ENCODE measurements at regions of chr6 and their contacts with region 1.

Region 1: DNA sequence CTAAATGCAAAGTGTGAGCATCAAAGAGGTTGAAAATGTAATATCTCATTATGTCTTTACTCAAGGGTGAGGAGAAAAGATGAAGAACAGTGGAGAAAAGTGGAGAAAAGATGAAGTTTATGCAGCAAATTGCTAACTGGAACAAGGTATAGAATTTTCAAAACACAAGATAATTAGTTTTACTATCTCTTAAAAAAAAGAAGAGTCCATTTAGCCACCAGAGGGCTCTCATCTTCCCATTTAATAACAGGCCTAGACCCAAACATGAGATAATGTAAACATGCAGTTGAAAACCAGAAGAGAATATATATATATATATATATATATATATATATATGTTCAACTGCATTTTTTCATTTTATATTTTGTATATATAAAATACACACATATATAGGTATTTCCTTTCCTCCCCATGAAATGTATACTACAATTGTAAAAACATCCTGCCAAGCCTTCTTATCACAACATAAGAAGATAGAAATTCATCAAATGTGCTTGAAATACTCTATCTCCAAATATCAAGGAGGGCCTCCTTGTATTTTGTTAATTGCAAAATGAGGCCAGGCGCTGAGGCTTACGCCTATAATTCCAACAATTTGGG is 78.4 kb downstream of the ADTRP start:
- DNase-seq: no peak
- H3K4me3 Mint-ChIP-seq: no peak overlapping the region
- H3K27ac Mint-ChIP-seq: no peak overlapping the region
- H3K4me1 Mint-ChIP-seq: peaks cover 28% of the 10 kb centered on the region
- H3K27me3 Mint-ChIP-seq: no peaks in the 10 kb centered on the region

Region 2: DNA sequence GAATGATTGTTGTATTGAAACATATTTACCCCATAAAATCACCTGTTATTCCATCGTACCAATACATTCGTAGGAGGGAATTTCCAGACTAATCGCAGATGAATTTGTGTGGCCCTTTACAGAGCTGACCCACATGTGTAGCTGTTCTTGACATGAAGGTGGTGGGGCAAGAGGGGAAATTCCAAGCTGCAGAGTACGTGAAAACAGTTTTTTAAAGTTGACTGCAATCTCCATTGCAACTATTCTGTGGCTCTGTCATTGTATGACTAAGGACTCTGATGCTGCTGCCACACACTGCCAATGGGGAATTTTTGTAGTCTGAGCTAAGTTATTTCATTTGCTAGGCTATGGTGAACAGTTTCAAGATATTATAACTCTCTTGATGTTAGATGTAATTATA is 124.8 kb after region 1 on chr6:
- CTCF ChIA-PET with region 1: no interaction called
- intact Hi-C with region 1: loop called (anchors 5 kb)
- DNase-seq: peak; percentile 55
- H3K4me3 Mint-ChIP-seq: no peak overlapping the region
- H3K27ac Mint-ChIP-seq: peak overlapping the region; percentile 65
- H3K4me1 Mint-ChIP-seq: peaks cover 11% of the 10 kb centered on the region
- H3K27me3 Mint-ChIP-seq: no peaks in the 10 kb centered on the region

Region 3: GRCh38 chr6:11912426-11912825 is 212.2 kb after region 1 on chr6:
- CTCF ChIA-PET with region 1: no interaction called
- intact Hi-C with region 1: loop called (anchors 1 kb)
- DNase-seq: peak; percentile 35
- H3K4me3 Mint-ChIP-seq: no peak overlapping the region
- H3K27ac Mint-ChIP-seq: no peak overlapping the region
- H3K4me1 Mint-ChIP-seq: peaks cover 2% of the 10 kb centered on the region
- H3K27me3 Mint-ChIP-seq: no peaks in the 10 kb centered on the region

Region 4: GRCh38 chr6:12075067-12075563 is 374.9 kb after region 1 on chr6:
- CTCF ChIA-PET with region 1: no interaction called
- intact Hi-C with region 1: loop called (anchors 1 kb)
- DNase-seq: peak; percentile 56
- H3K4me3 Mint-ChIP-seq: no peak overlapping the region
- H3K27ac Mint-ChIP-seq: no peak overlapping the region
- H3K4me1 Mint-ChIP-seq: peaks cover 59% of the 10 kb centered on the region
- H3K27me3 Mint-ChIP-seq: no peaks in the 10 kb centered on the region